ENCODE measurements at regions of chr6 and their contacts with region 1.

Region 1: DNA sequence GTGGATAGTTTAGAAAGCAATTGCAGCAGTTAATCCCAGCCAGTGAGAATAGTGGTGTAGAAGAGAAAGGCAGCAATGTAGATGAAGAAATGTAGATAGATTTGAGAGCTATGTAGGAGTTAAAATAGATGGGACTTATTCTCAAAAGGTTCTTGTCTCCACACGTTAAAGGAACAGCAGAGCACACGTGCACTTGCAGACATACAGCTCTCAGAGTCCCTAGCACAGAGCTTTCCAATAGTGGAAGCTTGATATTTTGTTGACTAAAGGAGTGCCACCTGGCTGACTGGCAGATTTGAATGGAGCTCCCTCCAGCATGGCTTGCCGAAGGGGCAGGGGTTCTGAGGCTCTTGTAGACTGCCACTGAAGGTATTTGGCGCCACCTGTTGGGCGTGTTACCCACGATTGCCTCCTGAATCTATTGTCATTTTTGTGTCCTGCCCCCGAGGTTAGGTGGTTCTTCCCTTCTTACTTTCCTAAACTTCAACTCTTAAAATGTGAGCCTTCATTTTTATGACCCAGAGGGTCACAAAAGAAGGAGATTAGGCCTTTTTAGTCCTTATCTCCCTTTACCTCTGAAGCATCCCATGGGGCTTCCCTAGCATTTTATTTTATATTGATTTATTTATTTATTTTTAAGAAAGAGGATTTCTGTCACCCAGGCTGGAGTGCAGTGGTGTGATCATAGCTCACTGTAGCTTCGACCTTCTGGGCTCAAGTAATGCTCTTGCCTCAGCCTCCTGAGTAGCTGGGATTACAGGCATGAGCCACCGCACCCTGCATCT is 16.4 kb downstream of the BRD2 start:
- DNase-seq: peak; percentile 91
- H3K4me3 Mint-ChIP-seq: no peak overlapping the region
- H3K27ac Mint-ChIP-seq: no peak overlapping the region
- H3K4me1 Mint-ChIP-seq: peaks cover 20% of the 10 kb centered on the region
- H3K27me3 Mint-ChIP-seq: no peaks in the 10 kb centered on the region
- CTCF ChIP-seq: peak; percentile 81

Region 2: DNA sequence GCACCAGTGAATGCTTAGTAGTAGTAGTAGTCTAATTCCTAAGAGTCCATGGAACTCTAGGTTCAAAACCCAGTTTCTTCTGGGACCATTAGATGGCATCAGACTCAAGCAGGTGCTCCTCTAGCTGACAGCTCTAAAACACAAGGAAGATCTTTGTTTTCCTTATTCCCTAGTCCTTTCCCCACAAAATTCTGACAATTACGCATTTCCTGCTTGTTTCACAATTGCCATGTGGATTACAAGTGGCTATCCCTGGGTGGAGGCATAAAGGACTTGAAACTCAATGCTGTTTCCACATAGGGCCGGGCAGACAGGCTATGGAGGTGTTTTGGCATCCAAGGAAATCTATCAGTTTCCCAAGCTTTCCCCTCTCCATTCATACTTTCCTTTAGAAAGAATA is 158.8 kb before region 1 on chr6:
- CTCF ChIA-PET with region 1: interaction called, 10 read pairs
- POLR2A ChIA-PET with region 1: interaction called, 4 read pairs
- intact Hi-C with region 1: no loop called
- DNase-seq: peak; percentile 87
- H3K4me3 Mint-ChIP-seq: no peak overlapping the region
- H3K27ac Mint-ChIP-seq: peak overlapping the region; percentile 49
- H3K4me1 Mint-ChIP-seq: peaks cover 7% of the 10 kb centered on the region
- H3K27me3 Mint-ChIP-seq: no peaks in the 10 kb centered on the region
- CTCF ChIP-seq: peak; percentile 42

Region 3: DNA sequence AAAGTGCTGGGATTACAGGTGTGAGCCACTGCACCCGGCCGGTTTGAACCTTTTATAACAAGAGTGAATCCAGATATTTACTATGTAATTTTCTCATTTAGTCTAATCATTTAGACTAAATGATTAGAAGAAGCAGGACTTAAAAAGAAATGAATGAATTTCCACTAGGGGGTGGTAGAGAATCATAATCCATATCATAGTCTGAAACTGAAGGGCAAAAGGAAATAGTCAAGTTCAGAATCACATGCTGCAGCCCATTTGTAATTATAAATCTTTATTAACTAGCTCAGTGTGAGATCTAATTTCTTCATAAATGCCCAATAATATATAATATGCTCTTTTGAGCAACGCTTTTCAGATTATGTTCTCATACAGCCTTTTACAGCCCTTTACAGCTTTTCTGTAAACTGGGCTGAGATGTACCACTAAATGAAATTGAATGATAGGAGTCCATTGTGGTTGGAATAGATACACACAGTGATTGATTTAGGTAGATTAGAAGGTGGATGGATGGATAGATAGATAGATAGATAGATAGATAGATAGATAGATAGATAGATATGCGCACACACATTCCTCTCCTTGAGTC is 99.0 kb before region 1 on chr6:
- CTCF ChIA-PET with region 1: interaction called, 31 read pairs
- POLR2A ChIA-PET with region 1: interaction called, 5 read pairs
- intact Hi-C with region 1: loop called (anchors 1 kb)
- DNase-seq: peak; percentile 74
- H3K4me3 Mint-ChIP-seq: no peak overlapping the region
- H3K27ac Mint-ChIP-seq: no peak overlapping the region
- H3K4me1 Mint-ChIP-seq: peaks cover 11% of the 10 kb centered on the region
- H3K27me3 Mint-ChIP-seq: no peaks in the 10 kb centered on the region
- CTCF ChIP-seq: peak; percentile 56

Region 4: DNA sequence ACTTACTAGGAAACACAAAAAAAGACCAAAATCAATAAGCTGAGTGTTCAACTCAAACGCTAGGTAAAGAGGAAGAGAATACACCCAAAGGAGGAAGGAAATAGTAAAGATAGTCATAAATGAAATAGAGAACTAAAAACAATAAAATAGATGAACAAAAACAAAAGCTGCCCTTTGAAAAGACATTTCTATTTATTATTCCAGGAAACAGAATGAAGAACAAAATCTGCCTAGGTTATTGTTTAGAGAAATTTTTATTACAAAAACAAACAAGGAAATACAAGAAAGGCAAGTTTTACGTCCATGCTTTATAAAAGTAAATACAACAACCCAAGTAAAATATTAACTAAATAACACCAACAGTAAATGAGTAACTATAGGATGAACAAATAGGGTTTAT is 64.1 kb before region 1 on chr6:
- CTCF ChIA-PET with region 1: interaction called, 13 read pairs
- POLR2A ChIA-PET with region 1: interaction called, 3 read pairs
- intact Hi-C with region 1: no loop called
- DNase-seq: no peak
- H3K4me3 Mint-ChIP-seq: no peak overlapping the region
- H3K27ac Mint-ChIP-seq: no peak overlapping the region
- H3K4me1 Mint-ChIP-seq: no peaks in the 10 kb centered on the region
- H3K27me3 Mint-ChIP-seq: peaks cover 60% of the 10 kb centered on the region
- CTCF ChIP-seq: no peak

Region 5: DNA sequence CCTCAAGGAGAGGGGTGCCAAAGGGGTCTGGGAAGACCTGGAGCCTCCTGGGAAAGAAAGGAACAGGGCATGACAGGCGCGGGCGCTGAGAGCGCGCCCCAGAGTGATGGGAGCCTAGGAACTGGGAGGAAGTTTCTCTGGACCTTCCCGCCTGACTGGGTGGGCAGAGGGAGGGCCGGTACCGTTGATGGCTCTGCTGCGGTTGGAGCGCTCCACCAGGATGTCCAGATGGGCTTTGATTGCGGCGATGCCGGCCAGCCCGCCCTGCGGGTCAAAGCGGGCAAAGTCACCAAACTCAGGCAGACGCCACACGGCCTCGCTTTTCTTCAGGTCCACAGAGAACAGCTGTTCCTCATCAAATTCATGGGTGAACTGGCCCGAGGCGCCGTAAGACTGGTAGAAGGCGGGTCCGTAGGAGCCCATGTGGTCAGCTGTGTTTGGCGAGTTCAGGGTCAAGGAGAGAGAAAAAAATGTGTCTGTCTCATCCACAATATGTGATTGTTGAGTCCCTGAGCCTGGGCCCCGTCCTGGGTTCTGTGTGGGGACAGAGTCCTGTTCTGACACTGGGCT is 23.1 kb after region 1 on chr6:
- CTCF ChIA-PET with region 1: interaction called, 10 read pairs
- POLR2A ChIA-PET with region 1: interaction called, 3 read pairs
- intact Hi-C with region 1: no loop called
- DNase-seq: no peak
- H3K4me3 Mint-ChIP-seq: no peak overlapping the region
- H3K27ac Mint-ChIP-seq: no peak overlapping the region
- H3K4me1 Mint-ChIP-seq: no peaks in the 10 kb centered on the region
- H3K27me3 Mint-ChIP-seq: peaks cover 95% of the 10 kb centered on the region
- CTCF ChIP-seq: no peak

Region 6: GRCh38 chr6:33069021-33069738 is 84.4 kb after region 1 on chr6:
- CTCF ChIA-PET with region 1: no interaction called
- POLR2A ChIA-PET with region 1: no interaction called
- intact Hi-C with region 1: no loop called
- DNase-seq: no peak
- H3K4me3 Mint-ChIP-seq: no peak overlapping the region
- H3K27ac Mint-ChIP-seq: no peak overlapping the region
- H3K4me1 Mint-ChIP-seq: no peaks in the 10 kb centered on the region
- H3K27me3 Mint-ChIP-seq: peaks cover 99% of the 10 kb centered on the region
- CTCF ChIP-seq: no peak